CD4-positive, alpha-beta T cell (primary cell): ENCODE measurements at regions of chrX and their contacts with region 1.

Region 1: DNA sequence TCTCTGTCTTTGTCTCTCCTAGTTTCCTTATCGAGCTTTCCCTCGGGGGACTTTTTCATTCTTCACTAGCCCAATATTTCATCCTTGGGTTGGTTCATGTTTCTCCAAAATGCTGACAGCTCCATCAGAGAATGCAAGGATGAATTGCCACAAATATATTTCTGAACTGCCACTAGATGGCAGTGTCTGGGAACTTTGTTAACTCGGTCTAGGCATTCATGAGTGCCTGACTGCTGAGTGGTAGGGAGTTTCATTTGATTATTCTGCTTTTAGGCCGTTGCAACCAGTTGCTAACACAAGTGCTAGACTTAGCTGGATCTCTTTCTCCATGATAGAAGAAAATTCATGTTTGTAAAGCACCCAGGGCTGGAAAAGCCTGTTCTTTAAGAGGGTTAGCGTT is 73.5 kb upstream of the RAP2C start:
- DNase-seq: peak in 8 of 14 experiments; percentile 0 to 65 (median 24)
- ATAC-seq: peak; percentile 43
- H3K4me3 ChIP-seq: no peak overlapping the region
- H3K4me3 Mint-ChIP-seq: no peak overlapping the region
- H3K27ac ChIP-seq: no peak overlapping the region
- H3K27ac Mint-ChIP-seq: no peak overlapping the region
- H3K4me1 ChIP-seq: no peaks in the 10 kb centered on the region
- H3K4me1 Mint-ChIP-seq: no peaks in the 10 kb centered on the region
- H3K27me3 ChIP-seq: no peaks in the 10 kb centered on the region
- H3K27me3 Mint-ChIP-seq: no peaks in the 10 kb centered on the region
- CTCF ChIP-seq: peak; percentile 61

Region 2: DNA sequence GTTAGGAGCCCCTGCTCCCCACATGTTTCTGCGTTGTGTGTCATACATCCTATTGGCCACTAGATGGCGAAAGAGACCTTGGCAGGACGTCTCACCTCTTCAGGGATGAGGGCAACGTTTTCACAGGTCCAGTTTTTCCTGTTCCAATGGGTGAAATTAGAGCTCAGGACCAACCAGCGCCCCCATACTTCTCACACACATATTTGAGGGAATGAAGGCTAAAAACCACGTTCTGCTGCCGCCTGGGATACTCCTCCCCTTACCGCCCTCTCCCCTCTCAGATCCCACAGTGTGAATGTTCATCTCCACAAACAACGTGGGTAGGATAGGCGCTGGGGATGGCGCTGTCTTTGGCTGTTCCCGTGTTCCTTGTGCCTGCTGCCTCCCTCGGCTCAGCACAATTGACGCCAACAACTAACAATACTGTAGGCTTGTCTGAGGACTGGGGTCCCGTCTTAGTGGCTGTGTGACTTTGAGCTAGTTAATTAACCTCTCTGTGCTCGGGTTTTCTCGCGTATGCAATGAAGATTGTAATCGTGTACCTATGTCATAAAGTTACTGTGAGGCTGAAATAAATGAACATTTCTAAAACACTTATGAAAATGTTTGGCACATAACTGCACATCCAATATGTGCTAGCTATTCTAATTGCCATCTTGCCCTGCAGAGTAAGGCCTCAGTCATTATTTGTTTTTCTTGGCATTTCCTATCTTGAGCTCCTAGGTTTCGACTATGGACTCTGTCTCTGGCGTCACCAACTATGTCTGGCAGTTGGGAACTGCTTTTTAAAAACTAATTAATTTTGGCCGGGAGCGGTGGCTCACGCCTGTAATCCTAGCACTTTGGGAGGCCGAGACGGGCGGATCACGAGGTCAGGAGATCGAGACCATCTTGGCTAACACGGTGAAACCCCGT is 451.0 kb before region 1 on chrX:
- CTCF ChIA-PET with region 1: no interaction called
- POLR2A ChIA-PET with region 1: no interaction called
- intact Hi-C with region 1: loop called in 1 of 2 experiments (anchors 5 kb)
- DNase-seq: peak in 7 of 14 experiments; percentile 2 to 72 (median 43)
- ATAC-seq: peak; percentile 64
- H3K4me3 ChIP-seq: no peak overlapping the region
- H3K4me3 Mint-ChIP-seq: no peak overlapping the region
- H3K27ac ChIP-seq: no peak overlapping the region
- H3K27ac Mint-ChIP-seq: no peak overlapping the region
- H3K4me1 ChIP-seq: peaks cover 6% of the 10 kb centered on the region
- H3K4me1 Mint-ChIP-seq: no peaks in the 10 kb centered on the region
- H3K27me3 ChIP-seq: no peaks in the 10 kb centered on the region
- H3K27me3 Mint-ChIP-seq: no peaks in the 10 kb centered on the region
- CTCF ChIP-seq: peak; percentile 63

Region 3: GRCh38 chrX:132488819-132489577 is 196.2 kb after region 1 on chrX and contains the start of gene MBNL3:
- CTCF ChIA-PET with region 1: no interaction called
- POLR2A ChIA-PET with region 1: no interaction called
- intact Hi-C with region 1: loop called in 1 of 2 experiments (anchors 10 kb)
- DNase-seq: peak; percentile 54 to 87 (median 67)
- ATAC-seq: peak; percentile 75
- H3K4me3 ChIP-seq: peak within 1 kb of the TSS; percentile 80
- H3K4me3 Mint-ChIP-seq: peak within 1 kb of the TSS; percentile 99
- H3K27ac ChIP-seq: peak within 1 kb of the TSS; percentile 75 to 80
- H3K27ac Mint-ChIP-seq: peak within 1 kb of the TSS; percentile 98
- H3K4me1 ChIP-seq: peaks cover 18% of the 10 kb centered on the region
- H3K4me1 Mint-ChIP-seq: peaks cover 61% of the 10 kb centered on the region
- H3K27me3 ChIP-seq: no peaks in the 10 kb centered on the region
- H3K27me3 Mint-ChIP-seq: no peaks in the 10 kb centered on the region
- CTCF ChIP-seq: no peak
- total RNA-seq, gene MBNL3: 19.0 to 19.4 TPM

Region 4: DNA sequence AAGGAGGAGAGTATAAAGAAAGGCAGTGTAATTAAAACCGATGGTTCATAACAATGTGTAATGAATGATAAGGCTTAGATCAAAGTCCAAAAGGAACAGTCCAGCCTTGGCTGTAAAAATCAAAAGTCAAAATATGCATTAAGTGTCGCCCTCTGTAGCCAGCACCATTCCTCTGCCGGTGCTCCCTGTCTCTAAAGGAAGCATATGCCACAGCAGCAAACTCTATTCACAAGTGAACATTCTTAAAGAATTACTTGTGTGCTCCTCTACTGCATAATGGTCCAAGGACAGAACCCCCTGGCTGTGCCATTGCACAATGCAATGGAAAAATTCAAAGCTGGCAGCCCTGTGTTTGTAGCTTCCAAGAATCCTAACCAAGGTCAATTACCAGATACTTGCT is 212.3 kb after region 1 on chrX:
- CTCF ChIA-PET with region 1: no interaction called
- POLR2A ChIA-PET with region 1: no interaction called
- intact Hi-C with region 1: loop called in 1 of 2 experiments (anchors 10 kb)
- DNase-seq: no peak
- ATAC-seq: no peak
- H3K4me3 ChIP-seq: no peak overlapping the region
- H3K4me3 Mint-ChIP-seq: no peak overlapping the region
- H3K27ac ChIP-seq: no peak overlapping the region
- H3K27ac Mint-ChIP-seq: no peak overlapping the region
- H3K4me1 ChIP-seq: no peaks in the 10 kb centered on the region
- H3K4me1 Mint-ChIP-seq: no peaks in the 10 kb centered on the region
- H3K27me3 ChIP-seq: no peaks in the 10 kb centered on the region
- H3K27me3 Mint-ChIP-seq: no peaks in the 10 kb centered on the region
- CTCF ChIP-seq: no peak

Region 5: DNA sequence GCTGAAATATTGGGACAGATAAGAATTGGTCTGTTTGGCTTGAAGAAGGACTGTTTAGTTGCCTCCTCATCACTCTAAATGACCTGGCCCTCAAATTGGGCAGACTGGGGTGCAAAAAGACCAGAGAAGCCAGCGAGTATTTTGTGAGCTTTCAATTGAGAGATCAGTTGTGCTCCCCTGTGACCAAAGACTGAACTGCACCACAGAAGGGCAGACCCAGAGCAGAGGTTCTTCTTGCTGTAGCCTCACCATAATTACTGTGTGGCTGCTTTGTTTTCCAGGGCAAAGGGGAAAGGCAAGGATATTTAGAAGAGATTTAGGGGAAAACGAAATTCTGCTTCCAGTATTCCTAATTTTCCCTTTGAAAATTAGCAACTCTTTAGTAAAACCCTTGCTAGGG is 300.1 kb after region 1 on chrX:
- CTCF ChIA-PET with region 1: interaction called, 3 read pairs
- POLR2A ChIA-PET with region 1: no interaction called
- intact Hi-C with region 1: loop called (anchors 5 kb)
- DNase-seq: peak in 3 of 14 experiments; percentile 9 to 32 (median 30)
- ATAC-seq: peak; percentile 48
- H3K4me3 ChIP-seq: no peak overlapping the region
- H3K4me3 Mint-ChIP-seq: no peak overlapping the region
- H3K27ac ChIP-seq: no peak overlapping the region
- H3K27ac Mint-ChIP-seq: no peak overlapping the region
- H3K4me1 ChIP-seq: no peaks in the 10 kb centered on the region
- H3K4me1 Mint-ChIP-seq: no peaks in the 10 kb centered on the region
- H3K27me3 ChIP-seq: no peaks in the 10 kb centered on the region
- H3K27me3 Mint-ChIP-seq: no peaks in the 10 kb centered on the region
- CTCF ChIP-seq: no peak

Region 6: GRCh38 chrX:132631579-132632232 is 338.9 kb after region 1 on chrX:
- CTCF ChIA-PET with region 1: interaction called, 11 read pairs
- POLR2A ChIA-PET with region 1: no interaction called
- intact Hi-C with region 1: loop called (anchors 1 kb)
- DNase-seq: peak in 3 of 14 experiments; percentile 32 to 45 (median 45)
- ATAC-seq: peak; percentile 43
- H3K4me3 ChIP-seq: no peak overlapping the region
- H3K4me3 Mint-ChIP-seq: no peak overlapping the region
- H3K27ac ChIP-seq: no peak overlapping the region
- H3K27ac Mint-ChIP-seq: no peak overlapping the region
- H3K4me1 ChIP-seq: no peaks in the 10 kb centered on the region
- H3K4me1 Mint-ChIP-seq: no peaks in the 10 kb centered on the region
- H3K27me3 ChIP-seq: peaks cover 0 to 5% of the 10 kb centered on the region in 2 experiments
- H3K27me3 Mint-ChIP-seq: no peaks in the 10 kb centered on the region
- CTCF ChIP-seq: peak; percentile 39

Region 7: DNA sequence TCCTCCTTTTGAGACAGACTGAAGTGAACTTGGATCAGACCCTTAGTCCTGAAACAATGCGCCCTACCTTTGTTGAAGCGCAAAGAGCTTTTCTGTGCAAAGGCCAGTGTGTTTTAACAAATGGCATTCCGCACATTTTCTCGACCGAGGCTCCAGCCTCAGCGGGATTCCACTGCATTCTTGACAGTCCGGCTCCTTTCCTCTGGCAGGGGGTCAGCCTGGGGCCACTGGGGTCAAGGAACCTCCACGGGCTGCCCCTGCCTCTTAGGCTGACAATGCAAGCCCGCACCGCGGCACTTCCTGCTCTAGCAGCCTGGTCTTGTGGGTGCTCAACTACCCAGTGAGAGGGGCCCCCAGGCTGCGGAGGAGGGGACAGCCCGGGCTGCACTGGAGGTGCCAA is 972.5 kb after region 1 on chrX:
- CTCF ChIA-PET with region 1: no interaction called
- POLR2A ChIA-PET with region 1: no interaction called
- intact Hi-C with region 1: no loop called
- DNase-seq: no peak
- ATAC-seq: no peak
- H3K4me3 ChIP-seq: no peak overlapping the region
- H3K4me3 Mint-ChIP-seq: no peak overlapping the region
- H3K27ac ChIP-seq: no peak overlapping the region
- H3K27ac Mint-ChIP-seq: no peak overlapping the region
- H3K4me1 ChIP-seq: no peaks in the 10 kb centered on the region
- H3K4me1 Mint-ChIP-seq: no peaks in the 10 kb centered on the region
- H3K27me3 ChIP-seq: no peaks in the 10 kb centered on the region
- H3K27me3 Mint-ChIP-seq: no peaks in the 10 kb centered on the region
- CTCF ChIP-seq: no peak